ENCODE measurements at regions of chr3 and their contacts with region 1.

Region 1: DNA sequence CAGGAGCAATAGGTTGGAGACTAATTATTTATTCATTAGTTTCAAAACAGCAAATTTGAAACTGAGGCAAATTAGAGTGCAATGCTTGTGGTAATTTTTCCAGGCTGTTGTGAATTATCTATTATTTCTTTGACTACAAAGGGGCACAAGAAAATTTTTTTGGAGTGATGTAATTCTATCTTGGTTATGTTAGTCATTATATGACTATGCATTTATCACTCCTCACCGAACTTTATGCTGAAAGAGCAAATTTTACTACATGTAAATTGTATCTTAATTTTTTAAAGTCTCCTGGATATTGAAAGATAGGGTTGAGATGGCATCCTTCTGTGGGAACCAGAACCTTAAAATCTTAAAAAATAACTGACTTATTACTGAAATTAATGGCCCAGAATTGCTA is 320.0 kb upstream of the ROBO1 start:
- DNase-seq: no peak
- ATAC-seq: no peak
- H3K4me3 ChIP-seq: no peak overlapping the region
- H3K4me3 Mint-ChIP-seq: no peak overlapping the region
- H3K27ac ChIP-seq: no peak overlapping the region
- H3K27ac Mint-ChIP-seq: no peak overlapping the region
- H3K4me1 ChIP-seq: no peaks in the 10 kb centered on the region
- H3K4me1 Mint-ChIP-seq: no peaks in the 10 kb centered on the region
- H3K27me3 ChIP-seq: no peaks in the 10 kb centered on the region
- H3K27me3 Mint-ChIP-seq: no peaks in the 10 kb centered on the region
- CTCF ChIP-seq: no peak

Region 2: DNA sequence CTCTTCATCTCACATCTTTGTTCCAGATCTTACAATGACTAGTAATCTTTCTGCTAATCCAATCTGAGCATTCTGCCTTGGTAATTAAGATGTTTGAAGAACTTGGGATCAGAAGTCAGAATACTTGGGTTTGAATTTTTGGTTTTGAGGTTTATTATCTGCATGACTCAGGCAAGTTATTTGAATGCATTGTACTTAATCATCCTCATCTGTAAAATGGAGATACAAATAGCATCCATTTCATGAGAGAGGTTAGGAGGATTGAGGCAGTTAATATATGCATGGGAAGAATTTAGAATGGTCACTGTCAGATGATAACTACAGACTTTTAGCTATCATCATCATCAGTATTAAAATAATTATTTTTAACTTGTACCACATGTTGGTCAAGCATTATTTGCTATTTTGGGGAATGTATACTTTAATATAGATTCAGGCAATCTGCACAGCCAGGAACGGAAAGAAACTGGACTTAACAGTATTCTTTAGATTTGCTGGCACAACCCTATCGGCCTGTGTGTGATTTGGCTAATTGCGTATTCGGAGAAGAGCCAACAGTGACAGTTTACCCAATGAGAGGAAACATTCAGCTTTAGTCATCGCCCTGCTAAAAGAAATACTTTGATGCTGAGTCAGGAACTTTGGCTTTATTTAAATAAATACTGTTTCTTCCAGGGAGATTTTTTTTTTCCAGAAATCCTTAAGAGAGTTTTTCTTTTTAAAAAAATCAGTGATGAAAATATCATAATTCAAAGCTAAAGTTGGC is 919.9 kb before region 1 on chr3:
- CTCF ChIA-PET with region 1: no interaction called
- POLR2A ChIA-PET with region 1: no interaction called
- intact Hi-C with region 1: loop called (anchors 10 kb)
- DNase-seq: no peak
- ATAC-seq: no peak
- H3K4me3 ChIP-seq: no peak overlapping the region
- H3K4me3 Mint-ChIP-seq: no peak overlapping the region
- H3K27ac ChIP-seq: no peak overlapping the region
- H3K27ac Mint-ChIP-seq: no peak overlapping the region
- H3K4me1 ChIP-seq: no peaks in the 10 kb centered on the region
- H3K4me1 Mint-ChIP-seq: no peaks in the 10 kb centered on the region
- H3K27me3 ChIP-seq: no peaks in the 10 kb centered on the region
- H3K27me3 Mint-ChIP-seq: no peaks in the 10 kb centered on the region
- CTCF ChIP-seq: no peak

Measured in B cell (primary cell).